Activated CD4-positive, alpha-beta T cell treated with anti-CD3 and anti-CD28 coated beads for 36 hours (primary cell): ENCODE measurements at regions of chr6 and their contacts with region 1.

Region 1: GRCh38 chr6:3251462-3252314 is 7.1 kb upstream of the PSMG4 start:
- DNase-seq: peak; percentile 89
- ATAC-seq: peak; percentile 95
- H3K4me3 Mint-ChIP-seq: no peak overlapping the region
- H3K27ac Mint-ChIP-seq: no peak overlapping the region
- H3K4me1 Mint-ChIP-seq: peaks cover 6% of the 10 kb centered on the region
- H3K27me3 Mint-ChIP-seq: peaks cover 29% of the 10 kb centered on the region

Region 2: GRCh38 chr6:3125815-3126214 is 125.9 kb before region 1 on chr6:
- CTCF ChIA-PET with region 1: interaction called, 67 read pairs
- POLR2A ChIA-PET with region 1: no interaction called
- intact Hi-C with region 1: loop called (anchors 1 kb)
- DNase-seq: no peak
- ATAC-seq: no peak
- H3K4me3 Mint-ChIP-seq: no peak overlapping the region
- H3K27ac Mint-ChIP-seq: no peak overlapping the region
- H3K4me1 Mint-ChIP-seq: peaks cover 10% of the 10 kb centered on the region
- H3K27me3 Mint-ChIP-seq: no peaks in the 10 kb centered on the region

Region 3: DNA sequence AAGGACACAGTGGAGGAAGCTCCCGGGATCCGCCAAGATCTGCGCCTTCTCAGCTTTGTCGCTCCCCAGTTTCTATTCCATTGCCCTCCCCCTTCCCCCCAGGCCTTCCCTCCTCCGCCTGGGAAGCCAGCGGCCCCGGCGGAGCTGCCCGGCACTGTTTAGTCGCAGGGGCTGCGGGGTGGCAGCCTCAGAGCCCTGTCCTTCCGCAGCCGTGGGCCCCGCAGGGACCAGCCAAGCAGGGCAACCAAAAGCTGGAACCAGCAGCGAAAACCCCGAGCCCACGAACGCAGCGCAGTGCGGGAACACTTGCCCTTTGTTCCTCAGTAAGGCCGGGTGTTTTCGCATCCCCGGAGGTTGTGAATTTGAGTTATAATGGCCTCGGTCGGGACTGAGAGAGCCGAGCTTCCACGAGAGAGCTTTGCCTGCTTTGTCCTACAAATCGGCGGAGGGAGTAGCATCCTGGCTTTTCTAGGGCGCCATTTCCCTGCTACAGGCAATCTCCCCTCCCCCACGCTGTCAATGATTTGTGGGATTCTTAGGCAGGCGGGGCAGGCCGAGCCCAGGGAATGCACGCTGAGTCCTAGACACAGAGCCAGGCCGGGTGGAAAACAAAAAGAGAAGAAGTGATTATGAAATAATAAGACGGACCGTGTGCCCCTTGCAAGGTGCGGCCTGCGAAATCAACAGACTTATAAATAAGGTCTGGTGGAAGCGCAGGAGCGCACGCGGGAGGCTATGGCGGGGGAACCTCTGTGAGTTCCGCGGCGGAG is 20.3 kb before region 1 on chr6:
- CTCF ChIA-PET with region 1: interaction called, 19 read pairs
- POLR2A ChIA-PET with region 1: no interaction called
- intact Hi-C with region 1: no loop called
- DNase-seq: peak; percentile 27
- ATAC-seq: no peak
- H3K4me3 Mint-ChIP-seq: peak overlapping the region; percentile 55
- H3K27ac Mint-ChIP-seq: no peak overlapping the region
- H3K4me1 Mint-ChIP-seq: peaks cover 43% of the 10 kb centered on the region
- H3K27me3 Mint-ChIP-seq: peaks cover 66% of the 10 kb centered on the region

Region 4: DNA sequence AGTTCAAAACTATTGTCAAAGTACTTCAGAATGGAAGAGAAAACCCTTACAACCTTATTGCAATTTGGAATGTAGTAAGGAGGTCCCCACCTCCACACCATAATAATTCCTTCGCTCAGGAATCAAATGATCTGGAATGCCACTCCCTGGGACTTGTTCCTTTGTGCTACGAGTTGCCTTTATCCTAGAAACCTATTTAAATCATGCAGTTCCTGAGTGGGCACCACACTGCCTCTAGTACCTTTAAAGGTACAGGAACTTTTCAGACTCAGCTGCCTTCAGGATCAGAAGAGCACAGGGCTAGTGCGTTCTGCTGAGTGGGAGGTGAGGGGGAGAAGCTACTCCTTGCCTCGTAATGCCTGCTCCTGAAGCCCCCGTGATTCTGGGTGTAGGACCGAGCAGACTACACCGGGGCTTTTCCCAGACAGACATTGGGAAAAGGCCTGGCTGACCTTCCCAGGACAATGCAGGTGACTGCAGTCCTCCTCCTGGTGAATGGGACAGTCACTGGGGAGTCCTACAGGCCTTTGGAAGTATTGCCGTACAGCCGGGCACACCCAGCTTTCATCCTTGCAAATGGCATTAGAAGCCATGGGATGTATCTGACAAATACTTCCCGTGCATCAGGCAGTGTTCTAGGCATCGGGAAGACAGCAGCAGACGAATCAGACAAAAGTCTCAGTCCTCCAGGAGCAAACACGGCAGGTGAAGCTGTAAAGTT is 12.4 kb before region 1 on chr6:
- CTCF ChIA-PET with region 1: interaction called, 14 read pairs
- POLR2A ChIA-PET with region 1: no interaction called
- intact Hi-C with region 1: no loop called
- DNase-seq: no peak
- ATAC-seq: no peak
- H3K4me3 Mint-ChIP-seq: no peak overlapping the region
- H3K27ac Mint-ChIP-seq: no peak overlapping the region
- H3K4me1 Mint-ChIP-seq: no peaks in the 10 kb centered on the region
- H3K27me3 Mint-ChIP-seq: peaks cover 41% of the 10 kb centered on the region

Region 5: GRCh38 chr6:3977875-3978711 is 726.4 kb after region 1 on chr6:
- CTCF ChIA-PET with region 1: no interaction called
- POLR2A ChIA-PET with region 1: no interaction called
- intact Hi-C with region 1: no loop called
- DNase-seq: peak; percentile 68
- ATAC-seq: peak; percentile 99
- H3K4me3 Mint-ChIP-seq: no peak overlapping the region
- H3K27ac Mint-ChIP-seq: no peak overlapping the region
- H3K4me1 Mint-ChIP-seq: peaks cover 11% of the 10 kb centered on the region
- H3K27me3 Mint-ChIP-seq: peaks cover 2% of the 10 kb centered on the region